SK-N-SH (cell line): ENCODE measurements at regions of chr9 and their contacts with region 1.

Region 1: GRCh38 chr9:34252670-34253459 is 74.0 kb downstream of the UBAP1 start:
- DNase-seq: peak; percentile 72
- H3K4me3 ChIP-seq: peak overlapping the region in 1 of 2 experiments; percentile 16; a peak in 1 of 4 replicates
- H3K27ac ChIP-seq: peak overlapping the region; percentile 34 to 69; a peak in 3 of 4 replicates
- H3K4me1 ChIP-seq: peaks cover 17 to 25% of the 10 kb centered on the region in 2 experiments; a peak in 3 of 4 replicates
- H3K27me3 ChIP-seq: no peaks in the 10 kb centered on the region
- CTCF ChIP-seq: peak; percentile 89
- EP300 ChIP-seq: no peak
- RAD21 ChIP-seq: peak; percentile 57

Region 2: DNA sequence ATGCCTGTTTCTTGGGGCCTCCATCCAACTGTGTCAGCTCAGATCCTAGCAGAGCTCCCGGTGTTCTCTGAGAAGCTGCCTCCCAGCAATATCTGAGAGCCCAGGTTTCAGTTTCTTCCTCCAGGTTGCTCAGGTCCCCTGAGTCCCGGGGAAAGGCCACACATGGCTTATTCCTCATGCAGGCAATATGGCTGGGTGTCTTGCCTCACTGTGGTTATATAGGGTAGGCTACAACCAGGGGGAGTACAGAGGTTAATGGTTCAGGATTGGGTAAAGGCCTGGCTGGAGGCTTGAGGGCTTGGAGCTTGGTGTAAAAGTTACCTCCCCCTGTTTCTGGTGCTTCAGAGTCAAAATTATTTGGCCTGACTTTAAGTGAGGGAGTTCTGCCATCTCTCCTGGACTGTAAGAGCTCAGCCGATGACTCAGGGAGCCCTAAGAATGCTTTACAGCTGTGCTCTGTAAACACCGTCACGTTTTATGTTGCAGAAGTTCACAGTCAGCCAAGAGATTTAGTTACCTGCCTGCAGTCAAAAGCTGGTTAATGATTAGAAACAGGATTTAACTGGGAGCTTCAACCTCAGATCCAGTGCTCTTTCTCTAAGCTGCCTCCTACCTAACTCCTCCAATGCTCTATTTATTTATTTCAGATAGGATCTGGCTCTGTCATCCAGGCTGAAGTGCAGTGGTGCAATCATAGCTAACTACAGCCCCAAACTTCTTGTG is 179.8 kb before region 1 on chr9:
- CTCF ChIA-PET with region 1: interaction called, 12 read pairs
- POLR2A ChIA-PET with region 1: no interaction called
- DNase-seq: no peak
- H3K4me3 ChIP-seq: no peak overlapping the region
- H3K27ac ChIP-seq: 0 out of 4 replicates have a peak overlapping the region, but pooled peaks of 1 of the 2 experiments have one; percentile 7
- H3K4me1 ChIP-seq: no peaks in the 10 kb centered on the region
- H3K27me3 ChIP-seq: no peaks in the 10 kb centered on the region
- CTCF ChIP-seq: no peak
- EP300 ChIP-seq: no peak
- RAD21 ChIP-seq: no peak

Region 3: GRCh38 chr9:34227445-34227844 is 25.4 kb before region 1 on chr9:
- CTCF ChIA-PET with region 1: interaction called, 24 read pairs
- POLR2A ChIA-PET with region 1: no interaction called
- DNase-seq: no peak
- H3K4me3 ChIP-seq: no peak overlapping the region
- H3K27ac ChIP-seq: no peak overlapping the region
- H3K4me1 ChIP-seq: peaks cover 1 to 6% of the 10 kb centered on the region in 2 experiments; a peak in 3 of 4 replicates
- H3K27me3 ChIP-seq: no peaks in the 10 kb centered on the region
- CTCF ChIP-seq: no peak
- EP300 ChIP-seq: no peak
- RAD21 ChIP-seq: no peak

Region 4: GRCh38 chr9:34242830-34243229 is 10.0 kb before region 1 on chr9:
- CTCF ChIA-PET with region 1: interaction called, 24 read pairs
- POLR2A ChIA-PET with region 1: no interaction called
- DNase-seq: no peak
- H3K4me3 ChIP-seq: no peak overlapping the region
- H3K27ac ChIP-seq: no peak overlapping the region
- H3K4me1 ChIP-seq: no peaks in the 10 kb centered on the region
- H3K27me3 ChIP-seq: no peaks in the 10 kb centered on the region
- CTCF ChIP-seq: no peak
- EP300 ChIP-seq: no peak
- RAD21 ChIP-seq: no peak

Region 5: DNA sequence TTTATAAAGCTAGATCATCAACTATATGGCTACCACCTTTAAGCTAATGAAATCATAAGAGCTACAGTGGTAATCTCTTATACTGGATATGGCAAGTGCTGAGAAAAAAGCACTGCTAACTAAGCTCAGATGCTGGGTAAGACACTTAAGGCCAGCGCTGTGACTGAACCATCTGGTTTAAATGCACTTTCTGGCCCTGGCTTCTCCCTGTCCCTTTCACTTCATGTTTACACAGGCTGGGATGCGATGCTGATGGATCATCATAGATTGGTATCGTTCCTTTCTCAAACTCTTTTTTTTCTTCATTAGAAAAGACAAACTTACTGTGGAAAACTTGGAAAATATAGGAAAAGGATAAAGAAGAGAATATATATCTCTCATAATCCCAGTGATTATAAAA is 23.9 kb after region 1 on chr9:
- CTCF ChIA-PET with region 1: interaction called, 12 read pairs
- POLR2A ChIA-PET with region 1: no interaction called
- DNase-seq: peak; percentile 79
- H3K4me3 ChIP-seq: no peak overlapping the region
- H3K27ac ChIP-seq: peak overlapping the region; percentile 16 to 56
- H3K4me1 ChIP-seq: peaks cover 0 to 10% of the 10 kb centered on the region in 2 experiments; a peak in 3 of 4 replicates
- H3K27me3 ChIP-seq: no peaks in the 10 kb centered on the region
- CTCF ChIP-seq: no peak
- EP300 ChIP-seq: peak in 1 of 2 experiments; percentile 14; a peak in 1 of 4 replicates
- RAD21 ChIP-seq: 0 out of 2 replicates have a peak, but pooled peaks have one; percentile 9